ENCODE measurements at regions of chr19 and their contacts with region 1.

Region 1: GRCh38 chr19:47284324-47284899 is 9.7 kb downstream of the INAFM1 start:
- DNase-seq: peak; percentile 71
- ATAC-seq: peak; percentile 52; the same call in 1 of the 2 replicates
- H3K4me3 ChIP-seq: no peak overlapping the region
- H3K27ac ChIP-seq: no peak overlapping the region
- H3K4me1 ChIP-seq: peaks cover 5% of the 10 kb centered on the region
- H3K27me3 ChIP-seq: no peaks in the 10 kb centered on the region
- CTCF ChIP-seq: peak; percentile 76

Region 2: GRCh38 chr19:47267350-47267759 is 17.1 kb before region 1 on chr19:
- CTCF ChIA-PET with region 1: no interaction called
- POLR2A ChIA-PET with region 1: no interaction called
- intact Hi-C with region 1: no loop called
- DNase-seq: no peak
- ATAC-seq: no peak
- H3K4me3 ChIP-seq: no peak overlapping the region
- H3K27ac ChIP-seq: no peak overlapping the region
- H3K4me1 ChIP-seq: no peaks in the 10 kb centered on the region
- H3K27me3 ChIP-seq: no peaks in the 10 kb centered on the region
- CTCF ChIP-seq: no peak

Region 3: GRCh38 chr19:47381653-47382279 is 97.4 kb after region 1 on chr19:
- CTCF ChIA-PET with region 1: no interaction called
- POLR2A ChIA-PET with region 1: interaction called, 11 read pairs
- intact Hi-C with region 1: no loop called
- DNase-seq: no peak
- ATAC-seq: no peak
- H3K4me3 ChIP-seq: no peak overlapping the region
- H3K27ac ChIP-seq: no peak overlapping the region
- H3K4me1 ChIP-seq: no peaks in the 10 kb centered on the region
- H3K27me3 ChIP-seq: no peaks in the 10 kb centered on the region
- CTCF ChIP-seq: no peak